Prostate gland (tissue), 2 donors: ENCODE measurements at regions of chr1 and their contacts with region 1.

Region 1: DNA sequence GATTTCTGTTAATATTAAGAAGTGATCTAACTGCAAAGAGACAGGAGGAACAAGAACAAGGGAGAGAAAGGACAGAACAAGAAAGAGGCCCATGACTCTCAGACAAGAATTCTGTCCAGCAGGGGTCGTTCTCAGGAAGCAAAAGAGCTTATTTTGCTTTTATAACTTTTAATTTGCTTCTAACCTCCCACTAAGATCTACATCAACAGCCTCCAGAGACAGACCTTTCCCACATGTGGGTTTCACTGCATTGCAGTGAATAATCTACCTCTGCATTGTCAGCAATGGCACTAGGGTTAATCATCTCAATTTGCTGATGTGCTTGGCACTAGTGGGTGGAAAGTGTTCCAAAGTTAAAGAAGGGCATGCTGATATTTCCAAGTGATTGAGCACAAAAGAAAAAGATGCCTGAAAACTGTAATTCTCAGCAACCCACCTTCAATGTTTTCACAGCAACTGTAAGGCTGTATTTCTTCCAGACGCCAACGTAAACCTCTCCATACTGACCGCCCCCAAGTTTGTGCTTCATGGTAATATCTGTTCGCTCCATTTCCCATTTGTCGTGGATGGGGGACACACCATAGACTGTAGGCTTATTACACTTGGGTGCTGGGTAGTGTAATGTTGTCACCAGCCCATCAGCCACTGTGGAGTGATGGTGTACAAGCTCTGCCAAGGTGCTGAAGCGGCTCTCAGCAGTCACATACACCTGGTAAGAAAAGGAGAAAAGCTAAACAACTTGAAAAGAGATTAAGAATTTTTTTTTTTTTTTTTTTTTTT is 39.5 kb downstream of the TOR3A start:
- DNase-seq: peak; percentile 13
- H3K4me3 ChIP-seq: no peak overlapping the region
- H3K27ac ChIP-seq: no peak overlapping the region
- H3K4me1 ChIP-seq: no peaks in the 10 kb centered on the region
- H3K27me3 ChIP-seq: no peaks in the 10 kb centered on the region
- CTCF ChIP-seq: peak; percentile 15 to 61 (median 49)
- POLR2A ChIP-seq: no peak

Region 2: GRCh38 chr1:179105350-179105749 is 16.0 kb before region 1 on chr1:
- intact Hi-C with region 1: no loop called
- DNase-seq: no peak
- H3K4me3 ChIP-seq: no peak overlapping the region
- H3K27ac ChIP-seq: no peak overlapping the region
- H3K4me1 ChIP-seq: no peaks in the 10 kb centered on the region
- H3K27me3 ChIP-seq: no peaks in the 10 kb centered on the region
- CTCF ChIP-seq: peak in 3 of 4 experiments; percentile 14 to 50 (median 47)
- POLR2A ChIP-seq: no peak

Region 3: GRCh38 chr1:179190861-179191260 is 69.5 kb after region 1 on chr1:
- intact Hi-C with region 1: loop called (anchors 2 kb)
- DNase-seq: no peak
- H3K4me3 ChIP-seq: no peak overlapping the region
- H3K27ac ChIP-seq: no peak overlapping the region
- H3K4me1 ChIP-seq: no peaks in the 10 kb centered on the region
- H3K27me3 ChIP-seq: no peaks in the 10 kb centered on the region
- CTCF ChIP-seq: no peak
- POLR2A ChIP-seq: no peak

Region 4: DNA sequence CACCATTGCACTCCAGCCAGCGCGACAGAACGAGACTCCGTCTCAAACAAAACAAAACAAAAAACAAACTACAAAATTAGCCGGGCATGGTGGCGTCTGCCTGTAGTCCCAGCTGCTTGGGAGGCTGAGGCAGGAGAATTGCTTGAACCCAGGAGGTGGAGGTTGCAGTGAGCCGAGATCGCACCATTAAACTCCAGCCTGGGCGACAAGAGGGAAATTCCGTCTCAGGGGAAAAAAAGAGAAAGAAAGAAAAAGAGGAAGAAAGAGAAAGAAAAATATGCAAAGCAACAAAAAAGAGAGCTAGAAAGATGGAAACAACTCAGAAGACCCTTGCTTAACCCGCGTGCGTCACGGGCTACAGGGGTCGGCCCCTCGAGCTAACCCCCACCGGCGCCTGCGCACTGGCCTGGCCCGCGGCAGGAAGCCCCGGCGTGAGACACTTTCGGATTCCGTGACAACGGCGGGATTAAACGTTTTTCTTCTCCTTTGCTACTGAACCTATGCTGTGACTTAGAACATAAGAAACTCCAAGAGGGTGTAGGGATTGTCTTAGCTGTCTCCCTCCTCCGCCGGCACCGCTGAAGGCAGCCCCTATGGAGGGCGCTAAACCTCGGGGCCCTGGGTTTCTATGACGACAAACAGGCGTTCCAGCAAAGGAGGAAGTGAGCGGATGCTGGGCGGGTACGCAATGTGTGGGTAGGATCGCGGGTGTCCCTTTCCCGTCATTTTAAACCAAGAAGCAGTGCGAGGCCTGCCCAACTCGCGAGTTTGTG is 244.2 kb after region 1 on chr1 and contains the start of gene AXDND1:
- intact Hi-C with region 1: loop called (anchors 10 kb)
- DNase-seq: peak; percentile 75
- H3K4me3 ChIP-seq: peak within 1 kb of the TSS; percentile 48 to 57
- H3K27ac ChIP-seq: peak within 1 kb of the TSS; percentile 89 to 93
- H3K4me1 ChIP-seq: no peaks in the 10 kb centered on the region
- H3K27me3 ChIP-seq: no peaks in the 10 kb centered on the region
- CTCF ChIP-seq: peak in 2 of 4 experiments; percentile 20 to 32
- POLR2A ChIP-seq: peak; percentile 40
- total RNA-seq, gene AXDND1: 7.0 TPM in 1 of 2 donors, not detected in the other